ENCODE measurements at regions of chr3 and their contacts with region 1.

Region 1: DNA sequence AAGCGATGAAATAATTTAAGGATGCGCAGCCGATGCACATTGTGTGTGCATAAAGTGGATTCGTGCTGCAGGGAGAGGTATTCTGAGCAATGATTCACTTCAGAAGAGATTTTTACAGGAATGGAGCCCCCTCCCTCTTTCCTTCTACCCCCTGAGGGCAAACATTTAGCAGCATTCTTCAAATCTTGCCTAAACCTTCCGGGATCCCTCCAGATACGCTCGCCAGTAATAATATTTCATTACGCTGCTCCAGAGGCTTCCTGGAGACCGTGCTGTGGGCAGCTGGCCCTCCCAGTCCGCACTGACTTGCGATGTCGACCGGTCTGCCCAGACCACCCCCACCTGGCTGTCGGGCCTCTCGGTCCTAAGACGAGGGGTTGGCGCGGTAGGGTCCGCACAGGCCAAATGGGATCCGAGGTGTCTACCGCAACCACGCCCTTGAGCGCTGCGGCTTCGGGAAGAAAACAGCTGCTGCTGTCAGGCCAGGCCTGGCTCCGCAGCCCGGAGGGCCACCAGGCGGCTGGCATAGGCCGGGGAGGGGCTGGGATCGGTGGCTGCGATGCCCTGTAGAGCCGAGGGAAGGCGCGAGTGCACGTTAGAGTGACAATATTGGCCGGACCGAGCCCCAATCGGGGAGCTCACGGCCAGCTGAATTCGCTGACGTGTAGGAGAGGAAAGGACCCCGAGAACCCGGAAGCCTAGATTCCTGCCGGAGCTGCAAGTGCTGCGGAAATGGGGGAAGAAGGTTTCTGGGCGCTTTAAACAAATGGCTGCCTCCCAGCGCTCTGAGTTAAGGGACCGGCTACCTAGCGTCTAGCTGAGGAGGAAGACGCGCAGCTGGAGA is 14.3 kb downstream of the ZIC4 start:
- DNase-seq: no peak
- H3K4me3 Mint-ChIP-seq: no peak overlapping the region
- H3K27ac Mint-ChIP-seq: peak overlapping the region; percentile 18
- H3K4me1 Mint-ChIP-seq: no peaks in the 10 kb centered on the region
- H3K27me3 Mint-ChIP-seq: peaks cover 67% of the 10 kb centered on the region

Region 2: GRCh38 chr3:147356909-147357900 is 34.8 kb before region 1 on chr3:
- intact Hi-C with region 1: loop called (anchors 2 kb)
- DNase-seq: no peak
- H3K4me3 Mint-ChIP-seq: no peak overlapping the region
- H3K27ac Mint-ChIP-seq: peak overlapping the region; percentile 79
- H3K4me1 Mint-ChIP-seq: no peaks in the 10 kb centered on the region
- H3K27me3 Mint-ChIP-seq: peaks cover 74% of the 10 kb centered on the region

Region 3: DNA sequence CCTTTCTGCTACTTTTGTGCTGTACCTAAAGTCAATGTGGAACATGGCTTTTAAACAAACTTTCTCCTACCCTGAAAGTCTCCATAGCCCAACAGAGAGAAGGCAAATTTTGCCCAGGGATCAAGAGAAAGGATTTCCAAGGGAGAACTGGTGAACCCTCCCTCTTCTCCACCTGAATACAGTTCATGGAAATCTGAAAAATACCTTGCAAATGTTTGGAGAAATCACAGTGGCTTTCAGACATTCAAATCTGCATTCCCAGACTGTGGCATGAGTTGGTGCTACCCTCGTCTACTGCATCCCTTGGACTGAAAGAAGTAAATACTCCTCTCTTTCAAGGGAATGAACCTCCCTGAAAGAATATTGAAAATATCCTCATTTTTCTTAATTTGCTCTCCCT is 24.3 kb before region 1 on chr3:
- intact Hi-C with region 1: no loop called
- DNase-seq: no peak
- H3K4me3 Mint-ChIP-seq: no peak overlapping the region
- H3K27ac Mint-ChIP-seq: no peak overlapping the region
- H3K4me1 Mint-ChIP-seq: no peaks in the 10 kb centered on the region
- H3K27me3 Mint-ChIP-seq: peaks cover 45% of the 10 kb centered on the region

Region 4: GRCh38 chr3:147377412-147378367 is 14.3 kb before region 1 on chr3:
- intact Hi-C with region 1: loop called (anchors 2 kb)
- DNase-seq: no peak
- H3K4me3 Mint-ChIP-seq: no peak overlapping the region
- H3K27ac Mint-ChIP-seq: no peak overlapping the region
- H3K4me1 Mint-ChIP-seq: no peaks in the 10 kb centered on the region
- H3K27me3 Mint-ChIP-seq: peaks cover 60% of the 10 kb centered on the region

Region 5: DNA sequence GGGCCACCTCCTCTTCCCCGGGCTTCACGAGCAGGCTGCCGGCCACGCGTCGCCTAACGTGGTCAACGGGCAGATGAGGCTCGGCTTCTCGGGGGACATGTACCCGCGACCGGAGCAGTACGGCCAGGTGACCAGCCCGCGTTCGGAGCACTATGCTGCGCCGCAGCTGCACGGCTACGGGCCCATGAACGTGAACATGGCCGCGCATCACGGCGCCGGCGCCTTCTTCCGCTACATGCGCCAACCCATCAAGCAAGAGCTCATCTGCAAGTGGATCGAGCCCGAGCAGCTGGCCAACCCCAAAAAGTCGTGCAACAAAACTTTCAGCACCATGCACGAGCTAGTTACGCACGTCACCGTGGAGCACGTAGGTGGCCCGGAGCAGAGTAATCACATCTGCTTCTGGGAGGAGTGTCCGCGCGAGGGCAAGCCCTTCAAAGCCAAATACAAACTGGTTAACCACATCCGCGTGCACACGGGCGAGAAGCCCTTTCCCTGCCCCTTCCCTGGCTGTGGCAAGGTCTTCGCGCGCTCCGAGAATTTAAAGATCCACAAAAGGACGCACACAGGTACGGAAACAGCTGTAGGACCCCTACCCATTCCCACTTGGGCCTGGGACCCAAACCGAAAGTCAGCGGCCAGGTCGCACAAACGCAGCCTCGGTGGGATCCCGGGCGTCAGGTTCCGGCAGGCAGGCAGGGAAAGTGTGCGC is 18.7 kb after region 1 on chr3:
- intact Hi-C with region 1: loop called (anchors 1 kb)
- DNase-seq: no peak
- H3K4me3 Mint-ChIP-seq: peak overlapping the region; percentile 37
- H3K27ac Mint-ChIP-seq: peak overlapping the region; percentile 69
- H3K4me1 Mint-ChIP-seq: peaks cover 6% of the 10 kb centered on the region
- H3K27me3 Mint-ChIP-seq: peaks cover 73% of the 10 kb centered on the region

Region 6: DNA sequence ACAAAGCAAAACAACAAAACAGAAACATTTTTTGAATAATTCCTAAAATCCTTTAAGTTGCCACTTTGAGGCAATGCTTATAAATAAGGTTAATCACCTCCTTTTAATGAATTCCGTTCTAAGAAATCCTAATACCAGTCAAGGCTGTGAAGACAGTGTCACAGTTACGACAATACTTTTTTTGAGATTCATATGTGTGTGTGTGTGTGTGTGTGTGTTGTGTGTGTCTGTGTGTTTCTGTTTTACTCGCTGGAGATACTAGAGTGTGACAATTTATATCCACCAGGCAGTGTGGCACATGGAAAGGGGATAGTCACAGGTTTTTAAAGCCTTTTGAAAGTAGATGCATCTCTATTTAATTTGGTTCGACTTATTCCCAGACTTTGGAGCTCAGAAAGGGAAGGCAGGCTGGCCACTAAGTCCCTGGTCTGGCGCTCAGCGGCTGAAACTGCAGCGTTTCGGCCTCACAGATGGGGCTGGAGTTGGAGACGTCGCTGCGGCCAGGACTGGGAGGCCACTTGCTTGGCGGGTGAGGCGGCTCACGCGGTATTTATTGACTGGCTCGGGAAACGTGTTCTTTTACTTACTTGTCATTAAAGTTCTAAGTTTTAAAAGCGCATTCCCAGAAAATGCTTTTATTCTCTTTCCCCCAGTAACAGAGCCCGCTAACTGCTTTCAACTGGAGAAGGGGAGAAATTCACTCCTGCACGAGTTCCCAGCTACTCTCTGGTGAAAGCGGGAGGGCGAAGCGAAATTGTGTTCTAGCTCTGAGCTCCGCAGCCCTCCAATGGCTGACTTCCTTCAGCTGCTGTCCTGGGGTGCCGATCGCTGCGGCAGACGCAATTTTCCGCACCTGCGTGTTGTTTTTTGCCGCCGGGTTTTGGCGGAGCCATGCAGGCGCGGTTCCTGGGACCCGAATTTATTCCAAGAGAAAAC is 30.9 kb after region 1 on chr3:
- intact Hi-C with region 1: loop called (anchors 2 kb)
- DNase-seq: no peak
- H3K4me3 Mint-ChIP-seq: no peak overlapping the region
- H3K27ac Mint-ChIP-seq: peak overlapping the region; percentile 31
- H3K4me1 Mint-ChIP-seq: no peaks in the 10 kb centered on the region
- H3K27me3 Mint-ChIP-seq: peaks cover 54% of the 10 kb centered on the region

Region 7: GRCh38 chr3:148229107-148229506 is 837.1 kb after region 1 on chr3:
- intact Hi-C with region 1: no loop called
- DNase-seq: no peak
- H3K4me3 Mint-ChIP-seq: no peak overlapping the region
- H3K27ac Mint-ChIP-seq: no peak overlapping the region
- H3K4me1 Mint-ChIP-seq: no peaks in the 10 kb centered on the region
- H3K27me3 Mint-ChIP-seq: no peaks in the 10 kb centered on the region